GM12878 (cell line): ENCODE measurements at regions of chr9 and their contacts with region 1.

Region 1: DNA sequence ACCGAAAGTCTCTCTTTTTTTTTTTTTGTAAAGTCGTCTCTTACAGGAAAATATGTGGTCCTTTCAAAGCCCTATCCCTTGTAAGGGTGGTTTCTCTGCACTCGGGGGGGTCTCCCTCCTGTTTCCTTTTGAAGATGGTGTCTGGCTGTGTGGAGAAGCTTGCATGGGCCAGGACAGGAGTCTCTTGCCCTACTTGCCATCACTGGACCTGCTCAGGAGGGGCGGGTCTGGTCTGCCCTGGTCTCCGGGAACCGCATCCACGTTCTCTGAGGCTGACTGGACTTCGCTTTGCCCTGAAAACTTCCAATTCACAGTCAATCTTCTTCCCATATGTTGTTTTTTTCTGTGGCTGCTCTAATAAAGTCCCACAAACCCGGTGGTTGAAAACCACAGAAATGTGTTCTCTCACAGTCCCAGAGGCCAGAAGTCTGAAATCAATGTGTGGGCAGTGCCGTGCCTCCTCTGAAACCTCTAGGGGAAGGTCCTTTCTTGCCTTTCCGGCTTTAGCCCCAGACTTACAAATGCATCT is 92.9 kb upstream of the IER5L start:
- DNase-seq: peak; percentile 76
- ATAC-seq: peak; percentile 83
- H3K4me3 ChIP-seq: peak overlapping the region; percentile 18
- H3K27ac ChIP-seq: peak overlapping the region; percentile 75
- H3K4me1 ChIP-seq: peaks cover 30% of the 10 kb centered on the region
- H3K27me3 ChIP-seq: peaks cover 0 to 2% of the 10 kb centered on the region in 2 experiments; a peak in 1 of 4 replicates
- CTCF ChIP-seq: no peak
- EP300 ChIP-seq: peak in 1 of 2 experiments; percentile 40; a peak in 1 of 4 replicates
- POLR2A ChIP-seq: no peak
- RAD21 ChIP-seq: 0 out of 2 replicates have a peak, but pooled peaks have one; percentile 7

Region 2: DNA sequence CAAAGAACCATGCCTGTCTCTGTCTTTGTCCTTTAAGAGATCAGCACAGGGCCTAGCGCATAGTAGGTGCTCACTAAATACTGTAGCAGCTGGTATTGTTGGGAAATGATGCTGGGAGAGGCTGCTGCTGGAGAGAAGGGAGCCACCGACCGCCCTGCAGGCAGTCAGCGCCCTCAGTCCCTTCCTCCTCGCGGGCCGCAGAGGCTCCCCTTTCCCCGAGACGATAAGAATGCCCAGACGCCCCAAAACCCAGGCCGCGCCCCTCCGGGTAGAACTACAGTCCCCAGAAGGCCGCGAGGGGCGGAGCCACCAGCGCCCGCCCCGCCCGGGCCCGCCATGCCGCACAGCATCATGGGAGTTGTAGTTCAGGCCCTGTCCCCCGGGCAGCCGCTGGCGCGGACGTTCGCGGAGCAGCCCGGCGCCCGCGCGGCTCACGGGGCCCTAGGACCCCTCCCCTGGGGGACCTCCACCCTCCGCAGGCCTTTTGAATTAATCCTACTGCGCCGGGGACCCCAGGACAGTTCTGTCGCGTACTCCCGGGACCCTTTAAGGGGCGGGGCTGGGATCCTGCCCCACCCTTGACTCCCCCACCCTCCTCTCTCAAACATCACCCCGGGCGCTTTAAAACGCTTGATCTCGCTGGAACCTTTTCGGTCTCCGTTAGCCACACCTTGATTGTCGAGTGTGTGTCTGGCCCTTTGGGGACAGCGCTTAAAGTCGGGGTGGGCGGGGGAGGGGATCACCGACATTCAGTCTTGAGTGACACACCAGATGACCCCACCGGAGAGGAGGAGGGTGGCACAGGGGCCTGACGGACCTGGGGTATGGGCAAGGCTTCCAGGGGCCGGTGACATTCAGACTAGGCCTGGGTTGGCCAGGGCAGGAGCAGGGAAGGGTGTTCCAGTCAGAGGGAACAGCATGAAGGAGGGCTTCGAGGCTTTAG is 68.1 kb before region 1 on chr9:
- CTCF ChIA-PET with region 1: no interaction called
- POLR2A ChIA-PET with region 1: no interaction called
- RAD21 ChIA-PET with region 1: no interaction called
- SMC1A ChIA-PET with region 1: no interaction called
- in situ Hi-C with region 1: no loop called
- intact Hi-C with region 1: loop called (anchors 2 kb)
- DNase-seq: no peak
- ATAC-seq: peak; percentile 99
- H3K4me3 ChIP-seq: peak overlapping the region; percentile 60
- H3K27ac ChIP-seq: no peak overlapping the region
- H3K4me1 ChIP-seq: no peaks in the 10 kb centered on the region
- H3K27me3 ChIP-seq: no peaks in the 10 kb centered on the region
- CTCF ChIP-seq: no peak
- EP300 ChIP-seq: no peak
- POLR2A ChIP-seq: 0 out of 2 replicates have a peak, but pooled peaks have one; percentile 34
- RAD21 ChIP-seq: no peak

Region 3: GRCh38 chr9:129320575-129321263 is 49.8 kb after region 1 on chr9:
- CTCF ChIA-PET with region 1: no interaction called
- POLR2A ChIA-PET with region 1: no interaction called
- RAD21 ChIA-PET with region 1: no interaction called
- SMC1A ChIA-PET with region 1: no interaction called
- in situ Hi-C with region 1: no loop called
- intact Hi-C with region 1: loop called (anchors 5 kb)
- DNase-seq: peak; percentile 34
- ATAC-seq: peak; percentile 91
- H3K4me3 ChIP-seq: peak overlapping the region; percentile 59
- H3K27ac ChIP-seq: no peak overlapping the region
- H3K4me1 ChIP-seq: peaks cover 12% of the 10 kb centered on the region
- H3K27me3 ChIP-seq: no peaks in the 10 kb centered on the region
- CTCF ChIP-seq: no peak
- EP300 ChIP-seq: no peak
- POLR2A ChIP-seq: no peak; the same call in 1 of the 2 replicates
- RAD21 ChIP-seq: no peak

Region 4: GRCh38 chr9:129362287-129363000 is 91.5 kb after region 1 on chr9:
- CTCF ChIA-PET with region 1: no interaction called
- POLR2A ChIA-PET with region 1: no interaction called
- RAD21 ChIA-PET with region 1: no interaction called
- SMC1A ChIA-PET with region 1: no interaction called
- in situ Hi-C with region 1: no loop called
- intact Hi-C with region 1: no loop called
- DNase-seq: no peak
- ATAC-seq: peak; percentile 33; the same call in 1 of the 3 replicates
- H3K4me3 ChIP-seq: no peak overlapping the region
- H3K27ac ChIP-seq: no peak overlapping the region
- H3K4me1 ChIP-seq: no peaks in the 10 kb centered on the region
- H3K27me3 ChIP-seq: no peaks in the 10 kb centered on the region; a peak in 1 of 4 replicates
- CTCF ChIP-seq: no peak
- EP300 ChIP-seq: no peak
- POLR2A ChIP-seq: no peak
- RAD21 ChIP-seq: no peak

Region 5: GRCh38 chr9:129413537-129414376 is 142.8 kb after region 1 on chr9:
- CTCF ChIA-PET with region 1: no interaction called
- POLR2A ChIA-PET with region 1: no interaction called
- RAD21 ChIA-PET with region 1: no interaction called
- SMC1A ChIA-PET with region 1: no interaction called
- in situ Hi-C with region 1: no loop called
- intact Hi-C with region 1: no loop called
- DNase-seq: peak; percentile 58
- ATAC-seq: peak; percentile 94
- H3K4me3 ChIP-seq: peak overlapping the region; percentile 84
- H3K27ac ChIP-seq: peak overlapping the region; percentile 94
- H3K4me1 ChIP-seq: peaks cover 12% of the 10 kb centered on the region
- H3K27me3 ChIP-seq: no peaks in the 10 kb centered on the region
- CTCF ChIP-seq: no peak
- EP300 ChIP-seq: peak; percentile 71 to 95; a peak in 3 of 4 replicates
- POLR2A ChIP-seq: peak; percentile 74
- RAD21 ChIP-seq: no peak

Region 6: DNA sequence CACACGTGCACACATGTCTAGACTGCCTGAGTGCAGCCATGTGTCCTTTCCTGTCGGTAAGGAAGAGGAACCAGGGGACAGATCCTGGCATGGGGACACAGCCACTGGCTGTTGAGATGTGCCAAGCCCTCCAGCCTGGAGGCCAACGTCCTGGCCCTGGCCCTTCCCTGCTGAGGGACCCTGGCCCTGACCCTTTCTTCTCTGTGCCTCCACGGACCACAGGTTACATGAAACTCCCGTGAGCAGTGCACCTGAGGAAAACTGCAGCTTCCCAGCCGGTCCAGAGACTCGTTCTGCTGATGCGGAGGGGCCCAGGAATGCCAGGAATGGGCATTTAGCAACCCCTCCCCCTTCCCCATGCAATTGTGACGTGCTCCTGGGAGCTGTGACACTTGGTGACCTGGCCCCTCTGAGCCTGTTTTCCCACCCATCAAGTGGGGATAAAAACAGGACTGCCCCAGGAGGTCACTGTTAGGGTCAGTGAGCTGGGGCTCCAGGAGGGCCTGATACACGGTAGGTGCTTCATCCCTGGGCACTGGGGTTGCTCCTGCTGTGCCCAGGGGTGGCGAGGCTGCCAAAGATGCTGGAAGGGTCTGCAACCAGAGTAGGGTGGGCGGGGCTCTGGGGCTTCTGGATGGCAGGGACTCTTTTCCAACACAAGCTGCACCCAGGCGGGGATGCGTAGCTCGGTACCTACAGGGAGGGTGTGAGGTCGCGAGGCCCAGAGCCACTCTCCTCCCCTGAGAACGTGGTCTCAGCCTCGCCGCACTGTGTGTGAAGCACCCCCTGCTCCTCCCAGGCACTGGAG is 198.4 kb after region 1 on chr9:
- CTCF ChIA-PET with region 1: no interaction called
- POLR2A ChIA-PET with region 1: no interaction called
- RAD21 ChIA-PET with region 1: no interaction called
- SMC1A ChIA-PET with region 1: no interaction called
- in situ Hi-C with region 1: no loop called
- intact Hi-C with region 1: no loop called
- DNase-seq: no peak
- ATAC-seq: no peak
- H3K4me3 ChIP-seq: no peak overlapping the region
- H3K27ac ChIP-seq: no peak overlapping the region
- H3K4me1 ChIP-seq: no peaks in the 10 kb centered on the region
- H3K27me3 ChIP-seq: peaks cover 0 to 1% of the 10 kb centered on the region in 2 experiments; a peak in 1 of 4 replicates
- CTCF ChIP-seq: no peak
- EP300 ChIP-seq: no peak
- POLR2A ChIP-seq: no peak
- RAD21 ChIP-seq: no peak

Region 7: GRCh38 chr9:129610473-129611301 is 339.7 kb after region 1 on chr9:
- CTCF ChIA-PET with region 1: no interaction called
- POLR2A ChIA-PET with region 1: no interaction called
- RAD21 ChIA-PET with region 1: no interaction called
- SMC1A ChIA-PET with region 1: no interaction called
- in situ Hi-C with region 1: no loop called
- intact Hi-C with region 1: loop called (anchors 2 kb)
- DNase-seq: no peak
- ATAC-seq: peak; percentile 77
- H3K4me3 ChIP-seq: peak overlapping the region; percentile 81; the same call in 1 of the 2 replicates
- H3K27ac ChIP-seq: no peak overlapping the region
- H3K4me1 ChIP-seq: peaks cover 8% of the 10 kb centered on the region
- H3K27me3 ChIP-seq: no peaks in the 10 kb centered on the region
- CTCF ChIP-seq: peak; percentile 80 to 91 (median 90)
- EP300 ChIP-seq: no peak
- POLR2A ChIP-seq: no peak
- RAD21 ChIP-seq: peak; percentile 89